Heart right ventricle (tissue), 16 donors: ENCODE measurements at regions of chr2 and their contacts with region 1.

Region 1: DNA sequence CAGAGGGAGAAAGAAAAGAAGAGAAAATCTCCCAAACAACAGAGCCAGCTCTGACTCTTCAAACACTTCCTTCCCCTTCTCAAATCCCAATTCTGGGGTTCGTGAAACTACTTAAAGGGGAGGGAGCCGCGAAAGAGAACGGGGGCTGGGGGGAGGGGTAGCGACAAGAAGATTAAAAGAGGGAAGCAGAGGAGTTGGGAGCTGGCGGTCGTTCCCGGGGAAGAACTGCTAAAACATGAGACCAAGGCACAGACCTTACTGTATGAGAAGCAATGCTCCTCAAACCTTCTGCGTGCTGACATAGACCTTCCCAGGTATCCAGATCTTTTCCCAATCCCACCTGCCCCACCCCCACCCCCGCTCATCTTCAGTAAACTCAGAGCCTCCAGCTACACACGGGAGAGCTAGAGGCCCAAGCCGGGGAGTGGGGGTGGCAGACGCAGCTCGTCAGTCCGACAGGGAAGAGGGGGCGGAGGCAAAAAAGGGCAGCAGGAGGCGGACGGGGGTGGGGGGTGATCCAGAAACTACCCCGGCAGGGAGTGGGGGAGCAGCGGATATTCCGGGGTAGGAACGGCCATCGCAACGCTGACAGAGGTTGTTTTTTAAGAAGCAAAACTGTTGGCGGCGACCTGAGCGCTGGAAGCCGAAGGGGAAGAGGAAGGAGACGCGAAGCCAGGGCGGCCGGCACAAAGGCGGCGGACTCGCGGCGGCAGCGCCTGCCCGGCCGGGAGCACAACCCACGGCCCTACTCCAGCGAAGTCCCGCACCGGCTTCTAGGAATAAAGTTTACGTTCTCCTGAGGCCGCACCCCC is 1.0 kb downstream of the BAZ2B start:
- DNase-seq: peak; percentile 89 to 95
- ATAC-seq: peak; percentile 93 to 98 (median 96)
- H3K4me3 ChIP-seq: peak overlapping the region; percentile 57 to 81 (median 74)
- H3K27ac ChIP-seq: peak overlapping the region; percentile 94 to 100 (median 98)
- H3K4me1 ChIP-seq: peaks cover 0 to 65% (median 47%) of the 10 kb centered on the region in 9 donors
- H3K27me3 ChIP-seq: no peaks in the 10 kb centered on the region
- CTCF ChIP-seq: no peak

Region 2: GRCh38 chr2:159445307-159445706 is 170.0 kb before region 1 on chr2:
- intact Hi-C with region 1: loop called in 3 of 10 experiments (anchors 5 to 10 kb)
- DNase-seq: no peak
- ATAC-seq: no peak
- H3K4me3 ChIP-seq: no peak overlapping the region
- H3K27ac ChIP-seq: no peak overlapping the region
- H3K4me1 ChIP-seq: peaks cover 0 to 12% (median 3%) of the 10 kb centered on the region in 9 donors
- H3K27me3 ChIP-seq: no peaks in the 10 kb centered on the region
- CTCF ChIP-seq: no peak

Region 3: GRCh38 chr2:159456491-159457426 is 158.6 kb before region 1 on chr2:
- intact Hi-C with region 1: loop called in 1 of 10 experiments (anchors 10 kb)
- DNase-seq: no peak
- ATAC-seq: peak in 1 of 8 donors; percentile 35
- H3K4me3 ChIP-seq: no peak overlapping the region
- H3K27ac ChIP-seq: no peak overlapping the region
- H3K4me1 ChIP-seq: peaks cover 0 to 50% (median 36%) of the 10 kb centered on the region in 9 donors
- H3K27me3 ChIP-seq: no peaks in the 10 kb centered on the region
- CTCF ChIP-seq: no peak